ENCODE measurements at regions of chr4 and their contacts with region 1.

Region 1: GRCh38 chr4:53908661-53909078 is 155.7 kb downstream of the CHIC2 start:
- DNase-seq: peak; percentile 95
- ATAC-seq: peak; percentile 85
- H3K4me3 ChIP-seq: peak overlapping the region; percentile 55
- H3K27ac ChIP-seq: peak overlapping the region; percentile 27
- H3K4me1 ChIP-seq: peaks cover 25% of the 10 kb centered on the region
- H3K27me3 ChIP-seq: no peaks in the 10 kb centered on the region
- CTCF ChIP-seq: peak; percentile 97

Region 2: GRCh38 chr4:53490965-53491622 is 417.6 kb before region 1 on chr4:
- CTCF ChIA-PET with region 1: no interaction called
- POLR2A ChIA-PET with region 1: no interaction called
- intact Hi-C with region 1: loop called (anchors 5 kb)
- DNase-seq: peak; percentile 87
- ATAC-seq: peak; percentile 64
- H3K4me3 ChIP-seq: no peak overlapping the region
- H3K27ac ChIP-seq: no peak overlapping the region
- H3K4me1 ChIP-seq: peaks cover 9% of the 10 kb centered on the region
- H3K27me3 ChIP-seq: no peaks in the 10 kb centered on the region
- CTCF ChIP-seq: peak; percentile 91

Region 3: DNA sequence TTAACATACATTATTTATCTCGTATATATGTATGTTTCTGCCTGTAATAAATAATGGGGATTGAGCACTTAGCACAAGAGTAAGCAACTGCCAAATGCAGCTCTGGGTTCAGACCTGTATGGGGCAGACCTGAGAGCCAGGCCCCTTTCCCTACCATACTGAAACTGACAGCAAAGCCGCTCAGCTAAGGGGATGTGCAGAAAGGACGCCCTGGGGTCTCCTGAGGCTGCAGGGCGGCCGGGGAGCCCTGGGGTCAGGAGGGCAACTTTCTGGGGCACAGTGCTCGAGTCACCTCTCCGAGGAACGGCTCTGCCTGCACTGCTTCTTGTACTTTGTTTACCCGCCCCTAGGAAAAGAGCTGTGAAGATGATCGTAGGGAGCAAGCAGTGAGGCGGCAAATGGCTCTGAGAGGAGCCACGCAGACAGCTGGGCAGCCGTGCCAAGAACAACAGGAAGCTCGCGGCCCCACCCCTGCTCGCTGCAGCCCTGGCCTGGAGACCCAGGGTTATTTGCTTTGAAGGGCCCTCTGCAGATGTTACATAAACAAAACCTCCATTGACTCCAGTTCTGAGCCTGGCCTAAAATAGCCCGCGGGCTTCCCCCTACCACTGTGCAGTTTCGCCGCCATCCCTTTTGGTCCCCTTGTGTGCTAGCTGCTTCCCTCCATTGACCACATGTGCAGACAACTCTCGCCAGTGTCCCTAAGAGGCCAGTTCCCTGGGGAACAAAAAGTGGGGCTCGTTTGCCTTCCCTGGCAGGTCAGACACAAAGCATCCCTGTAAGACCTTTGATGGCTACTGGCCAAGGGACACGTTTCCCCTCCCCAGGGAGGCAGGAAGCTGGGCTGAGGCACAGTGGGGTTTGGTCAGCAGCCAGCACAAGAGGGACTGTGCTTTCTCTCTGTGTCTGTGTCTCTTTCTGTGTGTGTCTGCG is 206.1 kb before region 1 on chr4:
- CTCF ChIA-PET with region 1: interaction called, 9 read pairs
- POLR2A ChIA-PET with region 1: no interaction called
- intact Hi-C with region 1: loop called (anchors 1 kb)
- DNase-seq: peak; percentile 86
- ATAC-seq: peak; percentile 88
- H3K4me3 ChIP-seq: peak overlapping the region; percentile 63
- H3K27ac ChIP-seq: peak overlapping the region; percentile 88
- H3K4me1 ChIP-seq: peaks cover 34% of the 10 kb centered on the region
- H3K27me3 ChIP-seq: no peaks in the 10 kb centered on the region
- CTCF ChIP-seq: 0 out of 2 replicates have a peak, but pooled peaks have one; percentile 15

Region 4: DNA sequence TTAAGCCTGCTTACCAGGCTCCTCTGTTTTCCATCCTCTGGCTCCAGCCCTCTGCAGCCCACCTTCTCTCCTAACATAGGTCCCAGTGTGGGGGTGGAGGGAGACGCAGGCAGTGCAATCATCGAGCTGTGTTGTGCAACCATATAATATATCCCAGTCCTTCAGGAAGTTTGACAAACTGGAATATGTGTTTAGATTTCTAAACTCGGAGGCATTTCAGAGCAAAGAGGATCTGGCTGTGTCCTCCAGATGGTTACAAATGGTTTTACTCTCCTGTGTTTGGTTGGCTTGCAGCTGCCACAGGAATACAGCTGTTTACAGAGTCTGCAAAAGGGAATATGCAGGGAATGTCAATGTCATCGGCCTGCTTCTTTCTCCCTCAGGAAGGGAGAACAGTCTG is 122.0 kb before region 1 on chr4:
- CTCF ChIA-PET with region 1: no interaction called
- POLR2A ChIA-PET with region 1: no interaction called
- intact Hi-C with region 1: loop called (anchors 1 kb)
- DNase-seq: no peak
- ATAC-seq: no peak
- H3K4me3 ChIP-seq: no peak overlapping the region
- H3K27ac ChIP-seq: no peak overlapping the region
- H3K4me1 ChIP-seq: peaks cover 21% of the 10 kb centered on the region
- H3K27me3 ChIP-seq: no peaks in the 10 kb centered on the region
- CTCF ChIP-seq: no peak

Region 5: DNA sequence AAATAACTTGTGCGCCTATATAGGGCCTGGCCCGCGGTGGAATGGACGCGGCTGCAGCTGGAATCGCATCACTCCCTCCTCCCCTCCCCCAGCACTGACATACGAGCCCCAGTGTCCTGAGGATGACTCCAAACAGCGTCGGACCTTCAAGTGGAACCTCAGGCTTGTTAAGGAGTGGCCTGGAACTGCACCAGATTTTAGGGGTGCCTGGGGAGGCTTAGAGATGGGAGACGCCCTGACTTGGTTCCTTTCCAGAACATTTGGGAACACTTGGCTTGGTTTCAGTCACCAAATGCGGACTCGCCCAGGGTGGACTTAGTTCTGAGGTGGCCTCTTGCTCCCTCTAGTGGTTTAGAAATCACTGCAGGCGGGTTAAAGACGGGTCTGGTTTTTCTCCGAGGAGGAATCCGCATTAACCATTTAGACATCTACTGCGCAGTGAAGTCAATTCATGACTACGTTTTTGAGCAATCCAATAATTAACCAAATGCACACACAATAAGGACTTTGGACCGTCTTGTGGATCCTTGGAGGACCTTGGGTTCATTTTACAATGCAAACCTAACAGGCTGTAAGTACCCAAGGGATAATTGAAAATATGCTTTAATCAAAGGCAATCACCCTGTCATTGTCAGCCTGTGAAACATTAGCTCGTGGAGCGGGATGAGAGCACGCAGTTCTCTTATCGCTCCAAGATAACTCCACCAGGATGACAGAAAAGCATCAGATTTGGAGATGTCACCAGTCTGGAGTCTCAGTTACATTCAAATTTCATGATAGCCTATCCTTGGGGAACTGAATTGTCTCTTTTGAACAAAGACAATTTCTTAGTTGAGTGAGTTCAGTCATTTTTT is 309.2 kb after region 1 on chr4:
- CTCF ChIA-PET with region 1: interaction called, 4 read pairs
- POLR2A ChIA-PET with region 1: no interaction called
- intact Hi-C with region 1: loop called (anchors 1 kb)
- DNase-seq: peak; percentile 94
- ATAC-seq: peak; percentile 90
- H3K4me3 ChIP-seq: peak overlapping the region; percentile 70
- H3K27ac ChIP-seq: no peak overlapping the region
- H3K4me1 ChIP-seq: 0 out of 2 replicates have a peak, but pooled peaks cover 4% of the 10 kb centered on the region
- H3K27me3 ChIP-seq: no peaks in the 10 kb centered on the region
- CTCF ChIP-seq: peak; percentile 98

Measured in PC-3 (cell line).